ENCODE measurements at regions of chr6 and their contacts with region 1.

Region 1: GRCh38 chr6:42321976-42322375 is 104.3 kb upstream of the MRPS10 start:
- DNase-seq: peak in 1 of 35 experiments; percentile 17
- ATAC-seq: peak in 1 of 4 experiments; percentile 86
- H3K4me3 ChIP-seq: no peak overlapping the region
- H3K4me3 Mint-ChIP-seq: no peak overlapping the region
- H3K27ac ChIP-seq: no peak overlapping the region
- H3K27ac Mint-ChIP-seq: peak overlapping the region; percentile 58 to 79
- H3K4me1 ChIP-seq: peaks cover 7 to 15% of the 10 kb centered on the region in 2 experiments
- H3K4me1 Mint-ChIP-seq: peaks cover 59 to 71% (median 70%) of the 10 kb centered on the region in 3 donors
- H3K27me3 ChIP-seq: no peaks in the 10 kb centered on the region
- H3K27me3 Mint-ChIP-seq: no peaks in the 10 kb centered on the region

Region 2: DNA sequence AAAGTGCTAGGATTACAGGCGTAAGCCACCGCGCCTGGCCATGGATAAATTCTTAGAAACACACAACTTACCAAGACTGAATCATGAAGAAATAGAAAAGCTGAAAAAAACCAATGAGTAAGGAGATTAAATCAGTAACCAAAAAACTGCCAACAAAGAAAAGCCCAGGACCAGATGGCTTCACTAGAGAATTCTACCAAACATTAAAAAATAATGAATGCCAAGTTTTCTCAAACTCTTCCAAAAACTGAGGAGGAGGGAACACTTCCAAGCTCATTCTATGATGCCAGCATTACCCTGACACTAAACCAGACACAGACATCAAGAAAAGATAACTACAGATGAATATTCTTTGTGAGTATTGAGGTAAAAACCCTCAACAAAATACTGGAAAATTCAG is 471.1 kb before region 1 on chr6:
- CTCF ChIA-PET with region 1: no interaction called
- POLR2A ChIA-PET with region 1: interaction called in 1 of 2 experiments, 14 read pairs
- DNase-seq: no peak
- ATAC-seq: no peak
- H3K4me3 ChIP-seq: no peak overlapping the region
- H3K4me3 Mint-ChIP-seq: no peak overlapping the region
- H3K27ac ChIP-seq: no peak overlapping the region
- H3K27ac Mint-ChIP-seq: no peak overlapping the region
- H3K4me1 ChIP-seq: no peaks in the 10 kb centered on the region
- H3K4me1 Mint-ChIP-seq: peaks cover 5 to 8% (median 5%) of the 10 kb centered on the region in 3 donors
- H3K27me3 ChIP-seq: no peaks in the 10 kb centered on the region
- H3K27me3 Mint-ChIP-seq: no peaks in the 10 kb centered on the region